Heart left ventricle (tissue), 16 donors: ENCODE measurements at regions of chr13 and their contacts with region 1.

Region 1: DNA sequence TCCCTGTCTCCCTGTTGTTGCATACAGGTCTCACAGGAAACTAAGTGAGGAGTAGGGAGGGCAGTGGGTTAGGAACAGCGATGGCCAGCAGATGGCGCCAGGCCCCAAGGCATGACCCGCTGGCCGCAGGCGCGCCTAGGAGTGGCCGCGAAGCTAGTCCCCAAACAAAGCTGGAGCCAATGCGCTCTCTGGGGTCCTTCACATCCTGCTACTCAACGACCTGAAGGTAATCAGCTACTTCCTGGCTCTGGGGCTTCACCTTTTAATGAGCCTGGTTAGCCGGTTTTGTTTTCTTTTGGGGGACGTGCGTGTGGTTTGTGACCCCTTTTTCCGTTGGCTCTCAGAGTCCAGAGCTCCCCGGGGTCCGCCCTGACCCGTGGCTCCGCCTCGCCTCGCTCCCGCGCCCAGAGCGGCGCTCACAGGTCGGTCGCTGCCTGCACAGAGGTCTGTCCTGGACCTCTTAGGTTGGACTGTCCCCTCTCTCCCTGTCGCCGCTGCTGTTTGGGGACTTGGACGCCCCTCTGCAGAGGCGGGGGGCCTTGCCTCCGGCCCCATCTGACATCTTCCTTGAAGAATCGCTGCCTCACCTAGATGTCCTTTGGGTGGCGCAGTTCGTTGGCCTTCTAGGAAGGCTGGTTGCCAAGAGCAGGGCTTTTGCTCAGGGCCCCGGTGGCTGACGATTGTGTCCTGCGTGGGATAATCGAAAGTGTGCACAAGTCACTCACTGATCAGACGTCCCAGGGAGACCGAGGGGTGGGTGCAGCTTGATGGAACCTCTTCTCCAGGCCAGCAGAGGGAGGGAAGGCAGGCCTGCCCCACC is 62.1 kb upstream of the GTF3A start:
- DNase-seq: peak; percentile 77 to 92 (median 84)
- ATAC-seq: peak; percentile 85 to 96 (median 95)
- H3K4me3 ChIP-seq: peak overlapping the region in 11 of 12 donors; percentile 17 to 62 (median 50)
- H3K27ac ChIP-seq: no peak overlapping the region
- H3K4me1 ChIP-seq: peaks cover 0 to 9% (median 5%) of the 10 kb centered on the region in 12 donors
- H3K27me3 ChIP-seq: peaks cover 0 to 15% (median 0%) of the 10 kb centered on the region in 9 donors
- CTCF ChIP-seq: peak; percentile 84 to 98 (median 94)
- POLR2A ChIP-seq: no peak

Region 2: DNA sequence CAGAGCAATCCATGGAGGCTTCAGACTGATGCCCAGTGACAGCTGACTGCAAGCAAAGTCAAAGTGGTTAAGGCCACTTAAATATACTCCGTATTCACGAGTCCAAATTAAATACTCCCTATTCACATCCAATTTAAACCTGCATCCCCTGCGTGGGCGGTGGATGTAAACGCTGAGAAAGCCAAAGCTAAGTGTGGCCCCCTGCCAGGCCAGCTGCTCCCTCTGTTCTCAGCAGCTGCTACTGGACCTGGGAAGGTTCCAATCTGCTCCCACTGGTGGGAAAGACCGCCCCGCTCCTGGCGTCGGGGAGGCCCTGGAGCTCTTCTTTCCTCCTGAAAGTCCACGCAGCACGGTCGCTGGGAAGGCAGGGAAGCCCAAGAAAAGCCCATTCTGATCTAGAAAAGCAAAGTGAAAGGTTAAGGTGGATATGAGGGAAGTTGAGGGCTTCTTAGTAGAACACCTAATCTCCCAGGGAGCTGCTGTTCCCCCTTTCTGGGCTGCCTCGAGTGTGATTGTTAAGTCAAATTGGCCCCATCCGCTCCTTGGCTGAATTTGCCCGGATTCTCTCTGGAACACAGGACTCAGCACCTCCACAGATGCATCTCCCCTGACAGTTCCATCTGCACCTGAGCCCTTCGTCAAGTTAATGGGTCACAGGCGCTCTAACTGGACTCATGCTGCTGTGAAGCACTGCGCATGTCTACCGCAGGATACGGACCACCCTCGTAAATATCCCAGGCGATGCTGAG is 396.1 kb before region 1 on chr13:
- intact Hi-C with region 1: loop called in 1 of 10 experiments (anchors 5 kb)
- DNase-seq: peak; percentile 82 to 85 (median 84)
- ATAC-seq: peak in 2 of 4 donors; percentile 58 to 61
- H3K4me3 ChIP-seq: no peak overlapping the region
- H3K27ac ChIP-seq: peak overlapping the region in 3 of 12 donors; percentile 30 to 63 (median 43)
- H3K4me1 ChIP-seq: peaks cover 0 to 37% (median 12%) of the 10 kb centered on the region in 12 donors
- H3K27me3 ChIP-seq: no peaks in the 10 kb centered on the region
- CTCF ChIP-seq: no peak
- POLR2A ChIP-seq: no peak

Region 3: DNA sequence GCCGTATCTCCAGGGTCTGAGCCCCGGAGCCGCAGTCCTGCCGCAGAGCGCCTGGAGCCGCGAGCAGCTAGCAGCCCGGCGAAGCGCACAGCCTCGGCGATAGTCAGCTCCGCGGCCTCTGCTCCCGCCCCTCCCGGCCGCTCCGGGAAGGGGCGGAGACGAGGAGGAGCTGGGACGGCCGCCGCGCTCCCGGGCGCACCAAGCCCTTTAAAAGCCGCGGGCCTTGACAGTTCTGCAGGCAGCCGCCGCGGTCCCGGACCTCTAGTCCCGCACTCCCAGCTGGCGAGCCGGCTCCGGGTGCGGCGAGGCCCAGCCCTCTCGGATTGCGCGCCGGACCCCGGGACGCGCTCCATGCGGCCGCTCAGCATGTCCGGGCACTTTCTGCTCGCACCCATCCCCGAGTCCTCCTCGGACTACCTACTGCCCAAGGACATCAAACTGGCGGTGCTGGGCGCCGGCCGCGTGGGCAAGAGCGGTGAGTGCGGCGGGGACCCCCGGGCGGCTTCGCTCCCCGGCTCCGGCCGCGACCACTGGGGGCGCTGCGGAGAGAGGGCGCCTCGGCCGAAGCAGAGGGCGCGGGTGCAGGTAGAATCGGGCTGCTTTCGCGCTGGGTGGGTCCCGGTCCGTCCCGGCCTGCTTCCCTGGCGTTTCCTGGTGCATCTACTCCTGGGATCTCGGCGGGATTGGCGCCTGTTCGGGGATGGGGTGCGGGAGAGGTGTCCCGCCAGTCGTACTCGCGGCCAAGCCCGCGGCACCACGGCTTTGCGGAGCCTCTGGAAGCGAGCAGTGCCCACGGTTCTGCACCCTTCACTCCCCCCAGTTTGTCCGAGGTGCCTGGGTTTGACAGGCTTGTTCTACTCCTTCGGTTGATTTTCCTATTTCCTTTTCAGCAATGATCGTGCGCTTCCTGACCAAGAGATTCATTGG is 91.4 kb before region 1 on chr13 and contains the start of gene RASL11A:
- intact Hi-C with region 1: loop called in 2 of 10 experiments (anchors 5 to 10 kb)
- DNase-seq: peak; percentile 87 to 94 (median 88)
- ATAC-seq: peak; percentile 77 to 95 (median 92)
- H3K4me3 ChIP-seq: peak within 1 kb of the TSS; percentile 49 to 96 (median 90)
- H3K27ac ChIP-seq: peak within 1 kb of the TSS; percentile 72 to 97 (median 90)
- H3K4me1 ChIP-seq: peaks cover 0 to 53% (median 26%) of the 10 kb centered on the region in 12 donors
- H3K27me3 ChIP-seq: peaks cover 0 to 9% (median 0%) of the 10 kb centered on the region in 9 donors
- CTCF ChIP-seq: peak; percentile 84 to 99 (median 95)
- POLR2A ChIP-seq: peak in 1 of 2 donors; percentile 92
- total RNA-seq, gene RASL11A: 2.9 to 13.7 (median 5.4) TPM

Region 4: GRCh38 chr13:27826379-27827353 is 464.4 kb after region 1 on chr13:
- intact Hi-C with region 1: loop called in 6 of 10 experiments (anchors 1 to 5 kb)
- DNase-seq: peak; percentile 68 to 87 (median 73)
- ATAC-seq: peak; percentile 75 to 94 (median 90)
- H3K4me3 ChIP-seq: peak overlapping the region in 7 of 12 donors; percentile 15 to 43 (median 21)
- H3K27ac ChIP-seq: no peak overlapping the region
- H3K4me1 ChIP-seq: peaks cover 0 to 16% (median 4%) of the 10 kb centered on the region in 12 donors
- H3K27me3 ChIP-seq: peaks cover 10 to 87% (median 65%) of the 10 kb centered on the region in 9 donors
- CTCF ChIP-seq: peak; percentile 82 to 97 (median 89)
- POLR2A ChIP-seq: no peak

Region 5: GRCh38 chr13:27985600-27985999 is 623.3 kb after region 1 on chr13:
- intact Hi-C with region 1: loop called in 9 of 10 experiments (anchors 1 to 5 kb)
- DNase-seq: no peak
- ATAC-seq: no peak
- H3K4me3 ChIP-seq: no peak overlapping the region
- H3K27ac ChIP-seq: no peak overlapping the region
- H3K4me1 ChIP-seq: peaks cover 0 to 2% (median 0%) of the 10 kb centered on the region in 12 donors
- H3K27me3 ChIP-seq: peaks cover 16 to 88% (median 52%) of the 10 kb centered on the region in 9 donors
- CTCF ChIP-seq: no peak
- POLR2A ChIP-seq: no peak